Common myeloid progenitor, CD34-positive (primary cell): ENCODE measurements at regions of chr10 and their contacts with region 1.

Region 1: DNA sequence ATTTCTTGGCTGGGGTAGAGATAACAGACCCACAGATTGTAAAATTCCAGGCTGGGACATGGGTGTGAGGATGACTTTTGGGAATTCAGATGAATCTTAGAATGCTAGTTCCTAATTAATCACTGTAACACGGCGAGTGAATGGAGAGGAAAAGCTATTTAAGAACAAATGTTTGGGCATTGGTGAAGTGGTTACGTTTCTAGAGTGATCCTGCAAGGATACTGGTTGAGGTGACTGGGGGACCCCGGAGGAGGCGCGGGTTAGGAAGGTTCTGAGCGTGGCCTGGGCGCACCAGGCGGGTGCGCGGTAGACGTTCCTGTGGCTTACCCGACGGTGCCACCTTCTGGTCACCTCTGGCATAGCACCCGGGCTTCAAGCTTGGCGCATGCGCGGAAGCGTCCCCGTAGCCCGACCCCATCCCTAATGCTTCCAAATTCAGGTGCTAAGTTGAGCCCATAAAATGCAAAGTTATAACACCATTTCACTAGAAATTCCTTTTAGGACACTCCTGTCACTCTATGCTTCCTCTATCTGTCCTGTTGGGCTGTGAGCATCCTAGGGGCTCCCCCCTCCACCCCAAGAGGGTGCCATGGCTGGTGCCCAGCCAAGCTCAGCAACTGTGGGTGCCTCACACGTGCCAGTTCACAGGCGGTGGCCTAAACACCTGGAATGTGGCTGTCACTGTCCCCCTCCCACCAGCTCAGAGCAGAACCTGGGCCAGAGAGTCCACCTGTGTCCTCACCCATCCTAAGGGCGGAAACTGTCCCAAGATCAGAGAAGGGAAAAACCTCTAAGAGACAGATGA is 104.5 kb downstream of the PTPRE start:
- DNase-seq: peak; percentile 73 to 84 (median 74)
- H3K4me3 ChIP-seq: peak overlapping the region in 1 of 7 experiments; percentile 17
- H3K27ac ChIP-seq: no peak overlapping the region
- H3K4me1 ChIP-seq: peaks cover 0 to 6% (median 2%) of the 10 kb centered on the region in 4 experiments
- H3K27me3 ChIP-seq: no peaks in the 10 kb centered on the region

Region 2: DNA sequence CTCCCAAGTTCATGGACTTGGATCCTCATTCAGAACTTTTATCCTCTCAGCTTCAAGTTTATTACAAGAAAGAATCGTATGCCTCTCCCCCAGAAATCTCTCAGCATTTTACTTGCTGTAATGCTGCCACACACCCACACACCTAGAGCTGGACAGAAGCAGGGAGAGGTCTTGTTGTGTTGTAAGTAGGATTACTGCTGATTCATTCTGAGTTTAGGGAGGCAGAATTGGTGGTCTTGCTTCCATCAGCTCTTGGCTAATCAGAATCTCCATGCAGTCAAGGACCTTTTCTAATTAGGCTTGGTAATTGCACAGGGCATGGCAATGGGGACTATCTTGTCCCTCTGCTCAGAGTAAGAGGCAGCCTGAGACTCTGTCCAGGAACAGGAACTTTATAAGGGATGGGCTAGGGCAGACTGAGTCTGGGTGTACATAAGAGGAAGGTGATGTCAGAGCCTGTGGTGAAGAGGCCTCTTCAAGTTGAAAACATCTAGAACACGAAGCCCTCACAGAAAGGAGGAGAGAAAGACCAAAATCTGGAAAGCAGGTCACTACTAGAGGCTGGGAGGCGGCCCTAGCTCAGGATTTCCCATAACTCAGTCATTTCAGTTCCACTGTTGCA is 111.5 kb before region 1 on chr10:
- CTCF ChIA-PET with region 1: interaction called, 122 read pairs
- POLR2A ChIA-PET with region 1: no interaction called
- DNase-seq: peak in 2 of 3 donors; percentile 56 to 71
- H3K4me3 ChIP-seq: no peak overlapping the region
- H3K27ac ChIP-seq: no peak overlapping the region
- H3K4me1 ChIP-seq: peaks cover 0 to 14% (median 3%) of the 10 kb centered on the region in 4 experiments
- H3K27me3 ChIP-seq: no peaks in the 10 kb centered on the region

Region 3: GRCh38 chr10:127906548-127907377 is 104.6 kb before region 1 on chr10 and contains the start of gene PTPRE:
- CTCF ChIA-PET with region 1: interaction called, 122 read pairs
- POLR2A ChIA-PET with region 1: interaction called, 5 read pairs
- DNase-seq: peak; percentile 52 to 70 (median 67)
- H3K4me3 ChIP-seq: peak within 1 kb of the TSS; percentile 44 to 77 (median 67)
- H3K27ac ChIP-seq: no peak within 1 kb of the TSS
- H3K4me1 ChIP-seq: peaks cover 0 to 14% (median 12%) of the 10 kb centered on the region in 4 experiments
- H3K27me3 ChIP-seq: peaks cover 0 to 38% (median 8%) of the 10 kb centered on the region in 5 experiments

Region 4: GRCh38 chr10:127990846-127991542 is 20.4 kb before region 1 on chr10:
- CTCF ChIA-PET with region 1: interaction called, 12 read pairs
- POLR2A ChIA-PET with region 1: no interaction called
- DNase-seq: peak; percentile 58 to 85 (median 81)
- H3K4me3 ChIP-seq: peak overlapping the region in 3 of 7 experiments; percentile 22 to 48 (median 44)
- H3K27ac ChIP-seq: no peak overlapping the region
- H3K4me1 ChIP-seq: peaks cover 13 to 48% (median 37%) of the 10 kb centered on the region in 4 experiments
- H3K27me3 ChIP-seq: peaks cover 0 to 2% (median 0%) of the 10 kb centered on the region in 5 experiments

Region 5: DNA sequence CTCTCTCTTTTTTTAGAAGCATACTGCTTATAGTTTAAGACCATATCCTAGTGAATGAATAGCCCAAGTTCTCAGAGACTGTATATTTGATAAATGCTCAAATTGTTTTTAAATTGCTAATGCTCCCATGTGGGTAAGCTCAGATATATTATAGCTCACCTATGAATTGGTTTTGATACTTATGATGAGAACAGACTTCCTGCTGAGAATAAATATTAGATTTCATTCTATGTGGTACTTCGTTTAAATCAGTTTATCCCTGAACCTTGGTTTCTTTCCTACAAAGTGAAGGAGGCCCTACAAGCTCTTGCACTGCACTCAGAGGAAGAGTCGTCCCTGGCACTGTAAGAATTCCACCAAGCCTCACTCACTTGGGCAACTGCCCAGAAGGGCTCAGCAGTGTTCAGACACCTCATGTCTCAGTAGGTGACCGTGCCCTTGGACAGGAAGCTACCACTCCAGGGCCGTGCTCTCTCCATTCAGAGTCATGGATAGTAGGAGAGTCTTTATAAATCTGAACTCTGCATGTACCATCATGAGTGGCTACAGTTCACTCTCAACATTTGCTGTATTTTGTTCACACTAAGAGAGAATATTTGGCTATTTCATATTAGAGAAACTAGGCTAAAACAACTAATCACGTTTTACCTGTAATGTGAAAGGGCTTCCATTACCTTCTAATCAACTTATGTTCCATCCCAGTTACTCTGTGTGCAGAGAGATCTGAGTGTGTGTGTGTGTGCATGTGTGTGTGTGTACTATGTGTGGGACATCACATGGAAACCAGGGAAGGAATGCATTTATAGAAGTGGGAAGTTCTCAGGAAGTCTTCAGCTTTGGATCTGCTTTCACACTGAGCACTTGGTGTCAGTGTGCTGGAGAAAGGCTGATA is 10.7 kb before region 1 on chr10:
- CTCF ChIA-PET with region 1: interaction called, 16 read pairs
- POLR2A ChIA-PET with region 1: no interaction called
- DNase-seq: no peak
- H3K4me3 ChIP-seq: no peak overlapping the region
- H3K27ac ChIP-seq: no peak overlapping the region
- H3K4me1 ChIP-seq: peaks cover 0 to 11% (median 5%) of the 10 kb centered on the region in 4 experiments
- H3K27me3 ChIP-seq: peaks cover 0 to 2% (median 0%) of the 10 kb centered on the region in 5 experiments

Region 6: DNA sequence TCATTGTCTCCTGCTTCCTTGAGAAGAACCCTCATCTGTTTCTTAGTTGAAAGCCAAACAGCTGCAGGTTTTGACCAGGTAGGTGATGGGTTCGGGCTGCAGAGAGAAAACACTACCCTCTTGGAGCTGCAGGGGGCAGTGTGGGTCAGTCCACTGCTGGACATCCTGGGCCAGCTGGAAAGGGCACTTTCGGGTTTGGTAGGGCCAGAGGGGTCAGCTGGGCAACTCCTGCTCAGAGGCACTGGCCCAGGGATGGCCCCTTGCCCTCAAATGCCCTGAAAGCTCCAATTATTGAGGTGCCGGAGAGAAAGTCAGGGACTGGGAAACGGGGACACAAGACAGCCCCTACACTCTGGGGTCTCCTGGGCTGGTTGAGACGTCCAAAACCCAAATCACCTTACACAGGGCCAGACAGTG is 24.2 kb after region 1 on chr10:
- CTCF ChIA-PET with region 1: interaction called, 16 read pairs
- POLR2A ChIA-PET with region 1: no interaction called
- DNase-seq: peak in 1 of 3 donors; percentile 50
- H3K4me3 ChIP-seq: no peak overlapping the region
- H3K27ac ChIP-seq: no peak overlapping the region
- H3K4me1 ChIP-seq: no peaks in the 10 kb centered on the region
- H3K27me3 ChIP-seq: peaks cover 0 to 1% (median 0%) of the 10 kb centered on the region in 5 experiments